ENCODE measurements at regions of chr1 and their contacts with region 1.

Region 1: GRCh38 chr1:200971955-200972711 is 51.4 kb downstream of the KIF21B start:
- DNase-seq: peak; percentile 54 to 68
- H3K4me3 ChIP-seq: no peak overlapping the region
- H3K27ac ChIP-seq: no peak overlapping the region
- H3K4me1 ChIP-seq: no peaks in the 10 kb centered on the region
- H3K27me3 ChIP-seq: no peaks in the 10 kb centered on the region
- CTCF ChIP-seq: peak; percentile 71 to 88 (median 74)
- POLR2A ChIP-seq: no peak

Region 2: DNA sequence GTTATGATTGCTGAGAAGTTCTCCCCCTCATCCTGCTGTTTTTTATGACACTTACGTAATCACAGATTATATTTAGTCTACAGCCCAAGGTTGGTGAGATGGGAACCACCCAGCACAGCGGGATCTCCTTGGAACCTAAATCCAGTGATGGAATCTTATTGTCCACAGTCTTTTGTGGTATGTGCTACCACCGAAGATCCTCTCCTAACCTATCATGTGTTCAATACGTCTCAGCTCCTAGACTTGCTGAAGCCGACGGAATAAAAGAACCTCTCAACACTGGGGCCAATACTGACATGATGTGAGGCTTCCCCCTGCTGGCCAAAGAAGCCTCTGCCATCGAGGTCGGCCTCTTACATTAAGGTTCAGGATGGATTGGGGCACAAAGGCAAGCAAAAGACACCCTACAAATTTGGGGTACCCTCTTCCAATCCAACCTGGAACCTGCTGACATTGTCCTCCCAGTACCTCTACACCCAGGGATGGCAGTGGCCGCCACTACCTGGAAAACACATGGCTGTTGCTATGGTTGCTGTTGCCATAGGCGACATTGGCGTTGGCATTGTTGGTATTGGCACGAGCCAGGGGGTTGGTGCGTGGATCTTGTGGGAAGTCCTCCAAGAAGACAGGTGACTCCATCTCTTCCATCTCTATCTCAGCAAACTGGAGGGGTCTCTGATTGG is 70.8 kb after region 1 on chr1:
- intact Hi-C with region 1: loop called (anchors 5 kb)
- DNase-seq: peak; percentile 43 to 47
- H3K4me3 ChIP-seq: no peak overlapping the region
- H3K27ac ChIP-seq: no peak overlapping the region
- H3K4me1 ChIP-seq: no peaks in the 10 kb centered on the region
- H3K27me3 ChIP-seq: no peaks in the 10 kb centered on the region
- CTCF ChIP-seq: peak; percentile 55 to 79 (median 71)
- POLR2A ChIP-seq: no peak

Region 3: GRCh38 chr1:201114236-201115131 is 142.4 kb after region 1 on chr1:
- intact Hi-C with region 1: loop called (anchors 5 kb)
- DNase-seq: peak; percentile 84 to 87
- H3K4me3 ChIP-seq: peak overlapping the region; percentile 27 to 57
- H3K27ac ChIP-seq: no peak overlapping the region
- H3K4me1 ChIP-seq: no peaks in the 10 kb centered on the region
- H3K27me3 ChIP-seq: no peaks in the 10 kb centered on the region
- CTCF ChIP-seq: peak; percentile 72 to 91 (median 84)
- POLR2A ChIP-seq: peak in 1 of 2 donors; percentile 65